Cardiac septum (tissue), 1 donor: ENCODE measurements at regions of chr10 and their contacts with region 1.

Region 1: GRCh38 chr10:80078448-80079311 is at the start of gene TMEM254:
- DNase-seq: peak; percentile 92
- total RNA-seq, gene TMEM254: 7.1 TPM

Region 2: GRCh38 chr10:80064120-80064886 is 14.4 kb before region 1 on chr10:
- intact Hi-C with region 1: no loop called
- DNase-seq: no peak

Region 3: GRCh38 chr10:80110986-80111385 is 32.3 kb after region 1 on chr10:
- intact Hi-C with region 1: loop called (anchors 5 kb)
- DNase-seq: no peak

Region 4: GRCh38 chr10:80132299-80133139 is 53.8 kb after region 1 on chr10 and contains the start of gene PLAC9:
- intact Hi-C with region 1: loop called (anchors 5 kb)
- DNase-seq: peak; percentile 74
- total RNA-seq, gene PLAC9: 30.4 TPM